Panc1 (cell line): ENCODE measurements at regions of chr2 and their contacts with region 1.

Region 1: GRCh38 chr2:127591221-127591923 is 54.6 kb upstream of the GPR17 start:
- DNase-seq: peak; percentile 61
- ATAC-seq: peak; percentile 95
- H3K4me3 ChIP-seq: no peak overlapping the region
- H3K27ac ChIP-seq: no peak overlapping the region
- H3K4me1 ChIP-seq: no peaks in the 10 kb centered on the region
- H3K27me3 ChIP-seq: no peaks in the 10 kb centered on the region
- CTCF ChIP-seq: peak; percentile 99

Region 2: DNA sequence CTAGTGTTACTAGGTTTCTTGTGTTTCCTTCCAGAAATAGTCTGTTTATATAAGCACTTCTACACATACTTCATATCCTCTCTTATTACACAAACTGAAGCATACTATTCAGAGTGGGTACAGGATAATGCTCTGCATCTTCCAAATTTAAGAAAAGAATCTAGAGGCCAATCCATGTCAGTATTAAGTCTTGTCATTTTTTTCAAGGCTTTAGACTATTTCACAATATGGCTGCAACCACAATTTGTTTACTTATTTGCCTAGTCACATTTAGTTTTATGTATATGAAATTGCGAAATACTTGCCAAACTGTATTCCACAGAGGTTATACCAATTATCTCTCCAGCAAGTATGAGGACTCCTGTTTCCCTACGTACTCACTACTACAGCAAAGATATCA is 93.0 kb before region 1 on chr2:
- CTCF ChIA-PET with region 1: no interaction called
- POLR2A ChIA-PET with region 1: no interaction called
- in situ Hi-C with region 1: no loop called
- intact Hi-C with region 1: no loop called
- DNase-seq: no peak
- ATAC-seq: no peak
- H3K4me3 ChIP-seq: no peak overlapping the region
- H3K27ac ChIP-seq: no peak overlapping the region
- H3K4me1 ChIP-seq: no peaks in the 10 kb centered on the region
- H3K27me3 ChIP-seq: no peaks in the 10 kb centered on the region
- CTCF ChIP-seq: no peak

Region 3: GRCh38 chr2:127577973-127578372 is 13.4 kb before region 1 on chr2:
- CTCF ChIA-PET with region 1: interaction called, 10 read pairs
- POLR2A ChIA-PET with region 1: no interaction called
- in situ Hi-C with region 1: no loop called
- intact Hi-C with region 1: no loop called
- DNase-seq: no peak
- ATAC-seq: no peak
- H3K4me3 ChIP-seq: no peak overlapping the region
- H3K27ac ChIP-seq: no peak overlapping the region
- H3K4me1 ChIP-seq: no peaks in the 10 kb centered on the region
- H3K27me3 ChIP-seq: no peaks in the 10 kb centered on the region
- CTCF ChIP-seq: no peak

Region 4: GRCh38 chr2:127649684-127650040 is 58.3 kb after region 1 on chr2:
- CTCF ChIA-PET with region 1: interaction called, 42 read pairs
- POLR2A ChIA-PET with region 1: no interaction called
- in situ Hi-C with region 1: no loop called
- intact Hi-C with region 1: loop called (anchors 1 kb)
- DNase-seq: peak; percentile 45
- ATAC-seq: peak; percentile 87
- H3K4me3 ChIP-seq: no peak overlapping the region
- H3K27ac ChIP-seq: no peak overlapping the region
- H3K4me1 ChIP-seq: peaks cover 6% of the 10 kb centered on the region; the same call in 1 of the 2 replicates
- H3K27me3 ChIP-seq: no peaks in the 10 kb centered on the region
- CTCF ChIP-seq: peak; percentile 92

Region 5: DNA sequence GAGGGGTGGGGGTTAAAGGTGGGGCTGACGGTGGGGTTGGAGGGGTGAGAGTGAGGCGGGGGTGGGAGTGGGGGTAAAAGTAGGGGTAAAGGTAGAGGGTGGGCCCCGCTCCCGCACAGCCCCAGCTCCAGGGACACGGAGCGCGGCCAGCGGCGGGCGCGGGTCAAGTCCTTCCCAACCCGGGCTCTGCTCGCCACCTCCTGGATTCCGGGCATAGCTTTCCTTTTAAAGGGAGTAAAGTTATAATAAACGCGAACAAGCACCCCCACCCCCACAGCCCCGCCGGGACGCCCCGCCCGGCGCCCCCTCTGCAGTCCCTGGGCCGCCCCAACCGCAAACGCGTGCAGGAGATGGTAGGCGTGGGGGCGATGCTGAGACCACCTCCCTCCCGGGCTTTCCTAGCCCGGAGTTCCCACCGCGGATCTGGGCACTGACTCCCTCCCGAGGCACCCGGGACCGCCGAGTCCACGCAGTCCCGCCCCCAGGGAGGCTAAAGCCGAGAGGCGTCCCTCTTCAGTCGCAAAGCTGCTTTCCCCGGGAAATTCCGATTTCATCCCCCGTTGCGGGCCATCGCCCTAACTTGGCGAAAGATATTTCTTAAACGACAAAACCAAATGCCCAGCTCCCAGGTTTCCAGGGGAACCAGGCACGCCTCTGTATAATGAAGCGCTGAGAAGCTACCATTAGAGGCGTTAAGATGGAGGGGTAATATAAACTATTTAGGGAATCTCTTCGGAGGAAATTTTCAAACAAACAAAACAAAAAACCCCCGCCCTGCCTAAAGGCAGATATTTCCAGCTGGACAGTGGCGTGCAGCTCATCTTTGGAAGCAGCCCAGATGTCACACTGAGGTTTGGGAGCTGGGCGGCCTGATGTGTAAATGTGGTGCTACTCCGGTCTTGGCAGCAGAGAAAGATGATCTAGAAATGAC is 84.2 kb after region 1 on chr2 and contains the start of gene LIMS2:
- CTCF ChIA-PET with region 1: interaction called, 12 read pairs
- POLR2A ChIA-PET with region 1: no interaction called
- in situ Hi-C with region 1: no loop called
- intact Hi-C with region 1: no loop called
- DNase-seq: no peak
- ATAC-seq: peak; percentile 77
- H3K4me3 ChIP-seq: peak within 1 kb of the TSS; percentile 44 to 56
- H3K27ac ChIP-seq: peak within 1 kb of the TSS; percentile 13
- H3K4me1 ChIP-seq: peaks cover 11% of the 10 kb centered on the region
- H3K27me3 ChIP-seq: peaks cover 4% of the 10 kb centered on the region; the same call in 1 of the 2 replicates
- CTCF ChIP-seq: no peak; the same call in 1 of the 2 replicates
- total RNA-seq, gene LIMS2: 8.9 TPM